Thyroid gland (tissue), 4 donors: ENCODE measurements at regions of chr10 and their contacts with region 1.

Region 1: DNA sequence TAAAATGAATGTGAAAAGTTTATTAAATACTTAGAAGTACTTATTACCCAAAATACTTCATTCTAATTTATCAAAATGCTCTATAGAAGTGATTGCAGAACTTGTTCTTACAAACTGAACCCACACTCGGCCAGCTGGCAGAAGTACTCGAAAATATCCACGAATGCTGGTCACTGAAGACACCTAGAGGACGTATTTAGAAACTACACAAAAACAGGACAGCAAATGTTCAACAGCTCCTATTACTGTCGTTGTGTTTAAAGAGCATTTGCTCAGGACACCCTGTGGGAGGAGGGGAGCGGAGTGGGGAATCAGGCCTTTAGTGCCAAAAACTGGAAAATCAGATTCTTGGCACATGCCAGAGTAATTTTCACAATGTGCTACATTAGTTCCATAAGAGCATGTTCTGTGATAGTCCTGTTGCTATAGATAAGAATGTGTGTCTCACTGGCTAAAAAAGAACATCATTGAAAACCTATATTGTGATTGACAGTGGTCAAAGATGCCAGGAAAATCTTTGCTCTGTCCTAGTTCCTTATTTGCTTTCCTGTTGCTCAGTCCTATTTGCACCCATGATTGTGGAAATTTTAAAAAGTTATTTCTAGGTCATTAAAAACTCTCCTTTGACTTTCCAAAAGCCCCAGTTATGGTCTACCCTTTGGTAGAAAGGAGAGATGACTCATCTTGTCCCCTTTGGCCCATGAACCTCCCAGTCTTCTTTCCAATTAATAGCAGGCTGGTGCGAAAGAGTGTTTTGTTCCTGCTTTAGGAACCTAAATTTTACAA is 49.0 kb upstream of the NRBF2 start:
- DNase-seq: peak; percentile 63 to 72
- H3K4me3 ChIP-seq: no peak overlapping the region
- H3K27ac ChIP-seq: no peak overlapping the region
- H3K4me1 ChIP-seq: no peaks in the 10 kb centered on the region
- H3K27me3 ChIP-seq: no peaks in the 10 kb centered on the region
- CTCF ChIP-seq: peak; percentile 55 to 92 (median 72)
- POLR2A ChIP-seq: no peak

Region 2: DNA sequence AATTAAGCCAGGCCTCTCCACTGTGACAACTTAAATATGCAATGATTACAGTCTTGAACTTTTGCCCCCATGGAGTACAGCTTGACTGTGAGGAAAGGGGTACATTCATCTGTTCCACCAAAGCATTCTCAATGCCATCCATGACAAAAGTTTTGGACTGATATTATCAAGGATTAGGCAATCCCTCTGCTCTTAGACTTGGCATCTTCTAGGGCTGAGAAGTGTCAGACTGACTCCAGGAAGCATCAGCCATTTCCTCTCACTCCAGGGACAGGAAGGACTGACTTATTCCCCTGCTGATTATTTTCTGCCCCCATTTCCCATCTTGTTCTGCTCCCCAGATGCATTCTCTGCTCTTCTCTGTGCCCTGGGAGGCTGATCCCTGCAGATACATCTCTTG is 640.2 kb before region 1 on chr10:
- intact Hi-C with region 1: loop called (anchors 10 kb)
- DNase-seq: no peak
- H3K4me3 ChIP-seq: no peak overlapping the region
- H3K27ac ChIP-seq: no peak overlapping the region
- H3K4me1 ChIP-seq: no peaks in the 10 kb centered on the region
- H3K27me3 ChIP-seq: no peaks in the 10 kb centered on the region
- CTCF ChIP-seq: no peak
- POLR2A ChIP-seq: no peak

Region 3: DNA sequence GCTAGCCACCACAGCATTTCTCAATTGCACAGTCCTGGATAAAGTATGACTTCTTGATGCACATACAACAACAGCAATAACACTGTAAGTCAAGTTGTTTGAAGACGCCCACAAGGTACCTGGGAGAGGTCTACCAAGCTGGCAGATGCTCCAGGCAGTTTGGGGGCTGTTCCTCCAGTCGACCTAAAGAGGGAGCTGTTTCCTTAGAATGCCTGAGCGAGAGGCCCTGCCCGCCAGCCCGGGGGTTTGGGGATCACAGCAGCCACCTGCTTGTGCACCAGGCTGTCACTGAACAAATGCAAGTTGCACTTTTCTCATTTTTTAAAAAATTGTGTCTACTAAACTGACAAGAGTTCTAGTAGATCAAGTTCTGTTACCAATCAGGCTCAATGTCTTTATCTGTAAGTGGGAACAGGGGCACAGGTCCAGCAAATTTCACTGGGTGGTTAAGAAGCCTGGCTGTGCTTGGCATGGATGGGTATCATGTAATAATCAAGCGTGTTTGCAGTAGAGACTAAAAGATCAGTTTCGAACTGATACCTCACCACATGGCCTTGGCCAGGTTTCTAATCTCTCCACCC is 473.4 kb before region 1 on chr10:
- intact Hi-C with region 1: loop called (anchors 10 kb)
- DNase-seq: peak; percentile 69 to 73
- H3K4me3 ChIP-seq: no peak overlapping the region
- H3K27ac ChIP-seq: no peak overlapping the region
- H3K4me1 ChIP-seq: no peaks in the 10 kb centered on the region
- H3K27me3 ChIP-seq: no peaks in the 10 kb centered on the region
- CTCF ChIP-seq: peak; percentile 46 to 88 (median 78)
- POLR2A ChIP-seq: no peak

Region 4: DNA sequence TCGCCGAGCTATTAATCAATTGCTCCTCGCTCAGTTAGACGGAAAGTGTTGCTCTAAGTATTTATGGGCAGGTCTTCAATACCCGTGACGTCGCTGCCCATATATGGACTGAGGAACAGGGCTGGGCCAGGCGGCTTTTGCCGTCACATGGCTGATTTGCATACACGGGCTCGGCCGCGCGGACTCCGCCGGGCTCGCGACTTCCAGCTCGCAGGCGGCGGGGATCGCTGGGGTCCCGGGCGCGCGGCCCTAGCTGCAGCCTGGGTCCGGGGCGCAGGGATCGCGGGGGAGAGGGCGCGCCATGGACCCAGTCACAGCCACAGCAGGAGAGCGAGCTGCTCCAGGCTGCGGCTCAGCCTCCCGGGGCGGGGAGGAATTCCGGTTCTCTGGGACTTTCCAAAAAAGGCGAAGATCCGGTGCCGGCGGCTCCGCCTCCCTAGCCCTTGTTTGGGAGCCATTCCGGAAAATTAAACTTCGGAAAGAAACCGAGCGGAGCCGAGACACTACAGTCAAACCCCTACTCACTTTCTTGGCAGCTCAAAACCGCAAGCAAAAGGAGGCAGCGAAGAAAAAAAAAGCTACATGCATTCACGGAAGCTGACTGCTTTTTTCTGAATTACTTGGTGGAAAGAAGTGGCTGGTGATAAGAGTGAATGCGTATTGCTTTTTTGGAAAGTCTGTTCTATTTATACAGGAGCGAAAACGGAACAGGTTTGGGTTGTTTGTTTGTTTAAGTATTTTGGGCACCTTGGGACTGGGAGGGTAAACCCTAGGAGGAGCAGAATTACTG is 267.6 kb before region 1 on chr10 and contains the start of gene EGR2:
- intact Hi-C with region 1: loop called (anchors 10 kb)
- DNase-seq: peak; percentile 96
- H3K4me3 ChIP-seq: peak within 1 kb of the TSS; percentile 17 to 79 (median 75)
- H3K27ac ChIP-seq: peak within 1 kb of the TSS; percentile 72 to 97 (median 90)
- H3K4me1 ChIP-seq: peaks cover 33 to 36% of the 10 kb centered on the region in 2 donors
- H3K27me3 ChIP-seq: no peaks in the 10 kb centered on the region
- CTCF ChIP-seq: no peak
- POLR2A ChIP-seq: peak in 1 of 2 donors; percentile 63
- total RNA-seq, gene EGR2: 0.78 to 14.6 (median 2.9) TPM

Region 5: GRCh38 chr10:64234489-64234888 is 1150.4 kb after region 1 on chr10:
- intact Hi-C with region 1: no loop called
- DNase-seq: no peak
- H3K4me3 ChIP-seq: no peak overlapping the region
- H3K27ac ChIP-seq: no peak overlapping the region
- H3K4me1 ChIP-seq: no peaks in the 10 kb centered on the region
- H3K27me3 ChIP-seq: no peaks in the 10 kb centered on the region
- CTCF ChIP-seq: no peak
- POLR2A ChIP-seq: no peak